ENCODE measurements at regions of chr20 and their contacts with region 1.

Region 1: DNA sequence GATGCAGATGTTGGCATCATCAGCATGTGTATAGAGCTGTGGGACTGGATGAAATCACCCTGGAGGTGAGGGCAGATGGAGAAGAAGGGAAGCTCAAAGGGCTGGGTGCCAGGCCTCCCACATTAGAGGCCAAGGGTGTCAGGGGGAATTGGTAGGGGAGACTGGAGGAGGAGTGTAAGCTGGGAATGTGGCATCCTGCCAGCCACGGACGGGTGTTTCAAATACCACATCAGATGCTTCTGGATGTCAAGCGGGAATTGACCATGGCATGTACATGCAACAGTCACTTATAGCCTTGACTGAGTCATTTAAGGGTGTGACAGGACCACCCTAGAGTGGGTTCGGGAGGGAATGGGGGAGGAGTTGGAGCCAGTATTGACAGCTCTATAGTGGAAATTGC is 9.6 kb downstream of the ERGIC3 start:
- DNase-seq: peak in 2 of 4 experiments; percentile 7
- ATAC-seq: no peak
- H3K4me3 ChIP-seq: no peak overlapping the region
- H3K27ac ChIP-seq: no peak overlapping the region
- H3K4me1 ChIP-seq: no peaks in the 10 kb centered on the region; a peak in 1 of 5 replicates
- H3K27me3 ChIP-seq: no peaks in the 10 kb centered on the region
- CTCF ChIP-seq: no peak
- EP300 ChIP-seq: no peak
- POLR2A ChIP-seq: no peak
- RAD21 ChIP-seq: no peak

Region 2: DNA sequence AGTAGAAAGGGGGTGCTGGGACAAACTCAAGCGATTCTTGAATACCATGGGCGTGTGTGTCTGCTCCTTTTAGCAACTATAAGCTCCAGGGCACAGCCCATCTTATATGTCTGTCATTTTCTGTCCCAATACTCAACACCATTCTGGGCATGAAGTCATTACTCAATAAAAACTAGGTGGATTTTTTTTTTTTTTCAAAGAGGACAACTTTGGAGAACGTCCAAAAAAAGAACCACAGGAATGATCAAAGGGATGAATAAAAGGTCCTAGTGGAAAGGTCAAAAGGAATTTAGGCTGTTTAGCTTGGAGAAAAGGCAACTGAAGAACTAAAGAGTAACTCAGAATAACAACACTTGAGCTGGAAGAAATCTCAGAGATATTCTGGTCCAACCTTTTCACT is 164.2 kb before region 1 on chr20:
- CTCF ChIA-PET with region 1: no interaction called
- POLR2A ChIA-PET with region 1: no interaction called
- in situ Hi-C with region 1: no loop called
- intact Hi-C with region 1: no loop called
- DNase-seq: no peak
- ATAC-seq: no peak
- H3K4me3 ChIP-seq: no peak overlapping the region
- H3K27ac ChIP-seq: no peak overlapping the region
- H3K4me1 ChIP-seq: peaks cover 0 to 2% of the 10 kb centered on the region in 2 experiments; a peak in 1 of 5 replicates
- H3K27me3 ChIP-seq: no peaks in the 10 kb centered on the region
- CTCF ChIP-seq: no peak
- EP300 ChIP-seq: no peak
- POLR2A ChIP-seq: no peak
- RAD21 ChIP-seq: no peak

Region 3: GRCh38 chr20:35564872-35565271 is 13.4 kb after region 1 on chr20:
- CTCF ChIA-PET with region 1: no interaction called
- POLR2A ChIA-PET with region 1: interaction called, 10 read pairs
- in situ Hi-C with region 1: no loop called
- intact Hi-C with region 1: no loop called
- DNase-seq: peak in 2 of 4 experiments; percentile 7
- ATAC-seq: no peak
- H3K4me3 ChIP-seq: no peak overlapping the region
- H3K27ac ChIP-seq: no peak overlapping the region
- H3K4me1 ChIP-seq: peaks cover 0 to 8% of the 10 kb centered on the region in 2 experiments; a peak in 2 of 5 replicates
- H3K27me3 ChIP-seq: peaks cover 2 to 14% of the 10 kb centered on the region in 2 experiments; a peak in 4 of 5 replicates
- CTCF ChIP-seq: no peak
- EP300 ChIP-seq: no peak
- POLR2A ChIP-seq: no peak
- RAD21 ChIP-seq: no peak

Measured in K562 (cell line).